Aorta (tissue), 5 donors: ENCODE measurements at regions of chr3 and their contacts with region 1.

Region 1: GRCh38 chr3:42780892-42781700 is 8.0 kb upstream of the CCDC13 start:
- DNase-seq: no peak
- ATAC-seq: peak; percentile 82
- H3K4me3 ChIP-seq: no peak overlapping the region
- H3K27ac ChIP-seq: no peak overlapping the region
- H3K4me1 ChIP-seq: no peaks in the 10 kb centered on the region
- H3K27me3 ChIP-seq: no peaks in the 10 kb centered on the region

Region 2: GRCh38 chr3:42831321-42831713 is 50.2 kb after region 1 on chr3:
- intact Hi-C with region 1: loop called (anchors 5 kb)
- DNase-seq: peak; percentile 85
- ATAC-seq: peak; percentile 82
- H3K4me3 ChIP-seq: no peak overlapping the region
- H3K27ac ChIP-seq: no peak overlapping the region
- H3K4me1 ChIP-seq: no peaks in the 10 kb centered on the region
- H3K27me3 ChIP-seq: peaks cover 0 to 2% of the 10 kb centered on the region in 2 donors

Region 3: GRCh38 chr3:42839616-42840015 is 58.5 kb after region 1 on chr3:
- intact Hi-C with region 1: loop called (anchors 5 kb)
- DNase-seq: no peak
- ATAC-seq: peak; percentile 86
- H3K4me3 ChIP-seq: peak overlapping the region in 1 of 2 donors; percentile 40
- H3K27ac ChIP-seq: no peak overlapping the region
- H3K4me1 ChIP-seq: no peaks in the 10 kb centered on the region
- H3K27me3 ChIP-seq: no peaks in the 10 kb centered on the region

Region 4: DNA sequence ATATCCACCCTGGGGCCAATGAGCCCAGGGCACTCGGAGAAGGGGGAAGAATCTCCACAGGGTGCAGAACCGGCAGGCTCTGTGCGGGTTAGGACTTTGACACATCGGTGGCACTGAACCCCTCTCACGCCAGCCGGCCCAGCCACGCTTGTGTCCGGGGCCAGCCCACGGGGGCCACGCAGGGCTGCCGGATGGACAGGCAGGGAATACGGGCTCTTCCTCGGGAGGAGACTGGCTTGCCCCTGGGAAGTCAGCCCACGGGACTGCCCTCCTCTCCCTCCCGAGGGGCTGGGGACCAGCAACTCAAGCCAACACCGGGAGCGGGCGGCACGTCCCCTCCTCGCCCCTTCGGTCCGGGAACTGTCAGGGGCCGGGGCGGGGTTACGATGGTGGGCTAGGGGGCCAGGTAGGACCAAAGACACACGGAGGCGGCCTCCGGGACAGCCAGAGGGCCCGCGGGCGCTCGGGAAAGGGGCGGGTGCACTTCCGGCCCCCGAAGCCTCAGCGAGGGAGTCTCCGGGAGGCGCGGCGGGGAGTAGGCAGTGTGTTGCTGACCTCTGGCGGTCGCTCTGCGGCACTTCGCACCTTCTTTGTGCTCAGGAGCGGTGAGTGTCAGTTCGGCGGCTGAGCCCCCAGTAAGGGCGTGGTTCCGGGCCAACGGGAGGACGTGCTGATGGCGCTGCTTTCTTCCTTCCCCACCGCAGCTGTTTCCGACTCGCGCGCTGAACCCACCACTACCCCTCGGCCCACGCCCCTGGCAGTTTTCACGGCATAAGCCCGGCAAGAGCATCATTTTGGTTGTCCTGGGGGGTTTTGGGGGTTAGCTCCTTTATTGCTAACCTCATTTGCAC is 99.7 kb after region 1 on chr3:
- intact Hi-C with region 1: loop called (anchors 1 to 2 kb)
- DNase-seq: peak; percentile 91 to 94
- ATAC-seq: peak; percentile 98
- H3K4me3 ChIP-seq: peak overlapping the region; percentile 58 to 70
- H3K27ac ChIP-seq: no peak overlapping the region
- H3K4me1 ChIP-seq: no peaks in the 10 kb centered on the region
- H3K27me3 ChIP-seq: no peaks in the 10 kb centered on the region

Region 5: DNA sequence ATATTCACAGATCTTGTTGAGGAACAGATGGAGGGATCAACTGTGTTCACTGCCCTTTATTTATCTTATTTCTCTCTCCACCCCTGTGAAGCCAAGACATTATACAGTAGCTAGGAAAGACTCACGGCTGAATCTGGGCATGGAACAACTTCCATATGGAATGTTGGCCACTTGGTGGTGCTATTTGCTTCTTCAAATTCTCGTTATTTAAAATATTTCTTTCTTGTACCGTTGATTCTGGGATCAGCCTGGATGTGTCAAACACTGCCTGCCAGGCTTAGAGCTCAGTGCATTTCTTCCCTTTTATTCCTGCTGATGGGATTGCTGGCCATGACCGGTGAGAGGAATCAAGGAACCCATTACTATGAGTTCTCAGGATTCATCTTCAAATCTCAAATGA is 180.5 kb after region 1 on chr3:
- intact Hi-C with region 1: no loop called
- DNase-seq: no peak
- ATAC-seq: peak; percentile 69
- H3K4me3 ChIP-seq: no peak overlapping the region
- H3K27ac ChIP-seq: no peak overlapping the region
- H3K4me1 ChIP-seq: no peaks in the 10 kb centered on the region
- H3K27me3 ChIP-seq: no peaks in the 10 kb centered on the region